Activated naive CD4-positive, alpha-beta T cell treated with anti-CD3 and anti-CD28 coated beads, Interleukin-2, amount 10 ng/mL, durations not matched to agents 7 days and 5 days (primary cell): ENCODE measurements at regions of chr5 and their contacts with region 1.

Region 1: GRCh38 chr5:132526290-132526973 is 16.9 kb downstream of the IL5 start:
- DNase-seq: peak; percentile 46
- H3K4me3 Mint-ChIP-seq: no peak overlapping the region
- H3K27ac Mint-ChIP-seq: no peak overlapping the region
- H3K4me1 Mint-ChIP-seq: peaks cover 33% of the 10 kb centered on the region
- H3K27me3 Mint-ChIP-seq: peaks cover 35% of the 10 kb centered on the region

Region 2: GRCh38 chr5:132540764-132541163 is 14.3 kb after region 1 on chr5:
- CTCF ChIA-PET with region 1: interaction called, 18 read pairs
- DNase-seq: no peak
- H3K4me3 Mint-ChIP-seq: no peak overlapping the region
- H3K27ac Mint-ChIP-seq: no peak overlapping the region
- H3K4me1 Mint-ChIP-seq: peaks cover 5% of the 10 kb centered on the region
- H3K27me3 Mint-ChIP-seq: peaks cover 30% of the 10 kb centered on the region

Region 3: DNA sequence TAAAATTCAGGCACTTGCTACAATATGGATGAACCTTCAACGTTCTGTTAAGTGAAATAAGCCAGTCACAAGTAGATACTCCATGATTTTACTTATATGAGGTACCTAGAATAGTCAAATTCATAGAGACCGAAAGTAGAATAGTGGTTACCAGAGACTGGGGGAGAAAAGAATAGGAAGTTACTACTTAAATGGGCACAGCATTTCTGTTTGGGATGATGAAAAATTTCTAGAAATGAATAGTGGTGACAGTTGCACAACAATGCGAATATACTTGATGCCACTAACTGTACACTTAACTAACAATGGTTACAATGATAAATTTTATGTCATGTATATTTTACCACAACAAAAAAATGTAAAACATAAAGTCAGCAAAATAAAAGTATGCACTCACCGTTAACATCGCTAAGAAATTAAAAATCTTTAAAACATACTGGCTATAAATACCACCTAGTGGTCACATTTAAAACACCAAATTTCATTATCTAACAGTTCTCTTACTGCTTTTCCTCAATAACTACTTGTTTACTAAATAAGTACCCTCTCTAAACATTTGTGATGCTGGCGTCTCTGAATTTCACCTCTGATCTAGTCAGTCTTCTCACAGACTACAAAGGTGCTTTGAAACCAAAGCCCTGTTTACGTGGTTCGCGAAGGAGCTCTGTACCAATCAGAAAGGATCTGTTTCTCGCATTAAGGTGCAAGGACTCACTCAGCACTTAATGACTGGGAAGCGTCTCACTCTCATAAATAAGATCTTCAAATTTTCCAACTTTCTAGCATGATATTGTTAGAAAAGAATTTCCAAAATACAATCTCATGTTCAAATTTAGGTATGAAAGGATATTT is 188.2 kb after region 1 on chr5:
- CTCF ChIA-PET with region 1: interaction called, 18 read pairs
- DNase-seq: no peak
- H3K4me3 Mint-ChIP-seq: no peak overlapping the region
- H3K27ac Mint-ChIP-seq: no peak overlapping the region
- H3K4me1 Mint-ChIP-seq: peaks cover 12% of the 10 kb centered on the region
- H3K27me3 Mint-ChIP-seq: no peaks in the 10 kb centered on the region

Region 4: DNA sequence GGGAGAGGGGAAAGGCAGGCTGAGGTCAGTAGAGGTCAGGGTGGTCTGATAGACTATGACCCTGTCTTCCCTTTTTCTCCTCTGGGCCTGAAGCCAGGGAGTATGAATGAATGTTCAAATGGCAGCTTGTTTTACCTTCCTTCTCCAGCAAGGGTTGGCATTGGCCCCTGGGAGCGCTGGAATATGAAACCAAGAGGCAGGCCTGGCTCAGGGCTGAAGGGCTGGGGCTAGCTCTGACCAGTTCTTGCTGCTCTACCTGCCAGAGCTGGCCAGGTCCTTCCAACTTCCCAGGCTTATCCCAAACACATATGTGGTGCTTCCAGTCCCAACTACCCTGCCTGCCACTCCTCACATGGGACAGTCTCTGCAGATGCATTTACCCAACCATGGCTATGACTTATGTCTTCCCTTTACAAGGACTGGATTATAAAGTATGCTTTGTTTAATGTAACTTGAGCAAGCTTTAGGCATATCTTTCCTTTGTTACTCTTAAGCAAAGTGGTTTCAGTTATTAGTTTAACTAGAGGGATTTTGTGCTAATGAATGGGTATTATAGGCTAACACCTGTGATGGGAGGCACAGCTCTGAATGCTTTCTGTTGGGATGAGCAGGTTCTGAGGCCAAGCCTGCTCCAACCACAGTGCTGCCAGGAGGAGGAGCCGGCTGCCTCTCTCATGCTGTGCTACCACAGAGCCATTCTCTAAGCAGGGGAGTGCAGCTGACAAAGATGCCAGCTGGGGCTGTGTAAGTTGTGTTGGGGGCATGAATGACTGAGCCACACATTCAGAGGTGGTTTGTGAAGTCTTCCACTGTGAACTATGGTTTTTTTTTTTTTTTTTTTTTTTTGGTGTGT is 226.9 kb after region 1 on chr5:
- CTCF ChIA-PET with region 1: interaction called, 12 read pairs
- DNase-seq: peak; percentile 36
- H3K4me3 Mint-ChIP-seq: no peak overlapping the region
- H3K27ac Mint-ChIP-seq: no peak overlapping the region
- H3K4me1 Mint-ChIP-seq: peaks cover 10% of the 10 kb centered on the region
- H3K27me3 Mint-ChIP-seq: peaks cover 4% of the 10 kb centered on the region